Naive thymus-derived CD4-positive, alpha-beta T cell (primary cell): ENCODE measurements at regions of chr19 and their contacts with region 1.

Region 1: GRCh38 chr19:55605207-55605636 is 225 bp upstream of the ZNF865 start:
- DNase-seq: peak; percentile 90 to 99 (median 97)
- ATAC-seq: peak; percentile 87
- H3K4me3 ChIP-seq: peak overlapping the region; percentile 51
- H3K4me3 Mint-ChIP-seq: peak overlapping the region; percentile 78 to 98 (median 90)
- H3K27ac ChIP-seq: peak overlapping the region; percentile 90
- H3K27ac Mint-ChIP-seq: peak overlapping the region; percentile 77 to 96 (median 91)
- H3K4me1 ChIP-seq: peaks cover 7 to 18% of the 10 kb centered on the region in 2 donors
- H3K4me1 Mint-ChIP-seq: peaks cover 37 to 70% (median 64%) of the 10 kb centered on the region in 7 donors
- H3K27me3 ChIP-seq: no peaks in the 10 kb centered on the region
- H3K27me3 Mint-ChIP-seq: peaks cover 0 to 3% (median 0%) of the 10 kb centered on the region in 5 donors

Region 2: DNA sequence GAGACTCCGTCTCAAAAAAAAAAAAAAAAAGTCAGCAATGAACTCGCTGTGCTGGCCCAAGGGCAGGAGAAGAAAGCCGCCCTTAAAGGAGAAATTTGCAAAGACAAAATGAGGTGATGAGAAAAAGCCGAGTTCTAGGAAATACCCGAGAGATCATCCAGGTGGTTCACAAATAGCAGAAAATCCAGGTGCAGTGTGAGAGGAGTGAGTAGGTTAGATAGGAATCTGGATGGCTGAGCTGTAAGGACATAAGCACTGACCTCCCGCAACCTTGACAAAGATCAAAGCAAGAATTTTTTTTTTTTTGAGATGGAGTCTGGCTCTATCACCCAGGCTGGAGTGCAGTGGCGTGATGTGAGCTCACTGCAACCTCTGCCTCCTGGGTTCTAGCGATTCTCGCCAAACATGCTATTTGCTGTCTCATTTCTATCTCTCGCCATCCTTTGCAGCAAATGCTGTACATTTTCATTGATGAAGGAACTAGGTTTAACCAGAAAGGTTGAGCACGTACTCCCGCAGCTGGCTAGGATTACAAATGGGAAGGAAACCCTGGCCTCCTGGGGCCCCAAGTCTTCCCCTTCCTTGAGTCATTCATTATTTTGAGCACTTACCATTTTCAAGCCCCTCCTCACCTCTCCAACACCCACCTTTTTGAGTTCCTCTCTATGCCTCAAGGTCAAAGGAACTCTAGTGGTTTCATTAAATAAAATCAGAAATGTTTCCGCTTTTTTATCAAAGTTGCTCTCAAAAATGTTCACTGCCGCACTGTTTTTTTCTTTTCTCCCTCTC is 1819.9 kb before region 1 on chr19:
- CTCF ChIA-PET with region 1: no interaction called
- POLR2A ChIA-PET with region 1: no interaction called
- intact Hi-C with region 1: no loop called
- DNase-seq: no peak
- ATAC-seq: no peak
- H3K4me3 ChIP-seq: no peak overlapping the region
- H3K4me3 Mint-ChIP-seq: no peak overlapping the region
- H3K27ac ChIP-seq: no peak overlapping the region
- H3K27ac Mint-ChIP-seq: peak overlapping the region in 1 of 9 donors; percentile 4
- H3K4me1 ChIP-seq: no peaks in the 10 kb centered on the region
- H3K4me1 Mint-ChIP-seq: peaks cover 0 to 5% (median 0%) of the 10 kb centered on the region in 7 donors
- H3K27me3 ChIP-seq: no peaks in the 10 kb centered on the region
- H3K27me3 Mint-ChIP-seq: peaks cover 0 to 27% (median 18%) of the 10 kb centered on the region in 5 donors

Region 3: DNA sequence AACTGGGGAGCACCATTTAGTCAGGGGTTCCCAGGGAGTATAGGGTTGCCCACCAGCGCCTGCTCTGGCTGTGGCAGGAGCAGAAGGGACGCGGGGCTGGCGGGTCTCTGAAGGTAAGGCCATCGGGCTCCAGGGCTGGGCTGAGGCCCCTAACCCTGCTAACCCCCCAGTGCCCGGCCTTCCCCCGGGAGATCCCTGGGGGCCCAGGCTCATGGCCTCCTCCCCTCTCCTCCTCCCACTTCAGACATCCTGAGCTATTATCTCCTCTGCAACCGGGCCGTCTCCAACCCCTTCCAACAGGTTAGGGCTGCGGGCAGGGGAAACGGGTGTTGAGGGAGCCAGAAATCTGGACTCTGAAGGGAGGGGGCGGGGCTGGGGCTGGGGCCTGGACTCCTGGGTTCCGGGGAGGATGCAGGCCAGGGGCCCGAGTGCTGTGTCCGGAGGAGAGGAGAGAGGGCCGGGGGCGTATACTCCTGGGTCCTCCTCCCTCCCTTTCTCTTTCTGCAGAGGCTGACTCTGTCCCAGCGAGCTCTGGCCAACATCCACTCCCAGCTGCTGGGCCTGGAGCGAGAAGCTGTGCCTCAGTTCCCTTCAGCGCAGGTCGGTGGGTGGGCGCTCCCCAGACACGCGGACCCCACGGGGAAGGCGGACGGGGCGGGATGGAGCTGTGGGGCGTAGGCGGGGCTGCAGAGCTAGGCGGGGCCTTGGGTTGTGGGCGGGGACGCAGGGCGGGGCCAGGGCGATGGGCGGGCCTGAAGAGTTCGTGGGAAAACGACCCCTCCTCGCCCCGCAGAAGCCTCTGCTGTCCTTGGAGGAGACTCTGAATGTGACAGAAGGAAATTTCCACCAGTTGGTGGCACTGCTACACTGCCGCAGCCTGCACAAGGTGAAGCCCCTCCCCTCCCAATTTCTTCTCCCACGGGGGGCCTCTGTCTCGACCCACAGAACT is 1174.6 kb before region 1 on chr19:
- CTCF ChIA-PET with region 1: no interaction called
- POLR2A ChIA-PET with region 1: no interaction called
- intact Hi-C with region 1: no loop called
- DNase-seq: peak in 7 of 9 donors; percentile 22 to 60 (median 33)
- ATAC-seq: peak; percentile 87
- H3K4me3 ChIP-seq: no peak overlapping the region
- H3K4me3 Mint-ChIP-seq: peak overlapping the region; percentile 45 to 84 (median 66)
- H3K27ac ChIP-seq: no peak overlapping the region
- H3K27ac Mint-ChIP-seq: peak overlapping the region in 3 of 9 donors; percentile 24 to 63 (median 59)
- H3K4me1 ChIP-seq: peaks cover 0 to 10% of the 10 kb centered on the region in 2 donors
- H3K4me1 Mint-ChIP-seq: peaks cover 12 to 24% (median 21%) of the 10 kb centered on the region in 7 donors
- H3K27me3 ChIP-seq: no peaks in the 10 kb centered on the region
- H3K27me3 Mint-ChIP-seq: peaks cover 0 to 23% (median 12%) of the 10 kb centered on the region in 5 donors

Region 4: DNA sequence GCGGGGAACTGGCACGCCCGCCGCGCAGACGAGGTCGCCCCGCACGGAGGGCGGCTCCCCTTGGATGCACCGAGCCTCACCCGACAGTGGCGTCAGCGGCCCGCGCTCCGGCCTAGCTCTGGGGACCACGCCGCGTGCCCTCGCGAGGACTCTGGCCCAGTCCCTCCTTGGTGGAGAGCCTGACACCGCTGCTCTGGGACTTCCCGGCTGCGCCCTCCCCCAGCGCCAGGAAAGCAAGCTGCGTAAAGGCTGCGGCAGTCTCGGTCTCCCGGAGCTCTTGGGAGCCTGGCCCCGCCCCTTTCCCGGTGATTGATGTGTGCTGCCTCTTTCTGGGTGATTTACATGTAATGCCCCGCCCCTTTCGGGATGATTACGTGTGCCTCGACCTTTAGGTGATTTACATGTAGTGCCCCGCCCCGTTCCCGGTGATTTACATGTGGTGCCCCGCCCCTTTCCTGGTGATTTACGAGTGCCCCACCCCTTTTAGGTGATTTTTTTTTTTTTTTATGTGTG is 1141.6 kb before region 1 on chr19 and contains the start of gene LENG9:
- CTCF ChIA-PET with region 1: no interaction called
- POLR2A ChIA-PET with region 1: no interaction called
- intact Hi-C with region 1: loop called in 1 of 2 experiments (anchors 5 kb)
- DNase-seq: peak; percentile 73 to 97 (median 87)
- ATAC-seq: peak; percentile 81
- H3K4me3 ChIP-seq: peak within 1 kb of the TSS; percentile 88
- H3K4me3 Mint-ChIP-seq: peak within 1 kb of the TSS; percentile 84 to 95 (median 92)
- H3K27ac ChIP-seq: peak within 1 kb of the TSS; percentile 71
- H3K27ac Mint-ChIP-seq: peak within 1 kb of the TSS; percentile 86 to 98 (median 93)
- H3K4me1 ChIP-seq: peaks cover 17 to 23% of the 10 kb centered on the region in 2 donors
- H3K4me1 Mint-ChIP-seq: peaks cover 16 to 35% (median 33%) of the 10 kb centered on the region in 7 donors
- H3K27me3 ChIP-seq: peaks cover 0 to 3% of the 10 kb centered on the region in 2 donors
- H3K27me3 Mint-ChIP-seq: peaks cover 5 to 23% (median 7%) of the 10 kb centered on the region in 5 donors
- total RNA-seq, gene LENG9: 3.5 to 6.1 (median 4.3) TPM

Region 5: DNA sequence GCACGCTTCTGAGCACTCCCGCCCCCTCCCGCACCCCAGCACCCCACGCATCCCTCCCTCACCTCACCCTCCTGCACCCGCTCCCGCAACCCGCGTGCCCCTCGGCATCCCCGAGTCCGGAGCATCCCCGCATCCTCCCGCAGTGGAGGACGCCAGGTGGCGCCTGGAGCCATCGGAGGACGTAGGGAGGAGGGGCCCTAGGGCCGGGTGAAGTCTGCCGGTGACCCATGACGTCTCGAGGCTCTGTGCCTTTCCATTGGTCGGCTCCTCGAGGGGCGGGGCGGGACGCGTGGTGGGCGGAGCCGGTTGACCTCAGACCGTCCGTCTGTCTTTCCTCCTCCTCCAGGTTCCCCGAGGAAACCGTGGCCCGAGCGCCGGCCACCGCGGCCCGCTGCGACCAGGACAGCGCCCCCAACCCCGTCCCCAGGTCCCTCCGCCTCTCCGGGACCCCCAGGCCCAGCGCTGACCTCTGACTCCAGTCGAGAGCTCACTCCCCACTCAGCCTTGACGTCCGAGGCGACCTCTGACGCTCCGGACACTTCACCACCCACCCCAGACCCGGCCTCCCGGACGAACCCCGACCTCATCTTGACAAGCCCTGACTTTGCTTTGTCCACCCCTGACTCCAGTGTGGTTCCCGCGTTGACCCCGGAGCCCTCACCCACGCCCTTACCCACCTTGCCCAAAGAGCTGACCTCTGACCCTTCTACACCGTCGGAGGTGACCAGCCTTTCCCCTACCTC is 88.2 kb before region 1 on chr19:
- CTCF ChIA-PET with region 1: interaction called, 11 read pairs
- POLR2A ChIA-PET with region 1: interaction called, 7 read pairs
- intact Hi-C with region 1: loop called (anchors 1 kb)
- DNase-seq: peak; percentile 77 to 94 (median 85)
- ATAC-seq: peak; percentile 100
- H3K4me3 ChIP-seq: peak overlapping the region; percentile 48
- H3K4me3 Mint-ChIP-seq: peak overlapping the region; percentile 74 to 89 (median 84)
- H3K27ac ChIP-seq: peak overlapping the region; percentile 66
- H3K27ac Mint-ChIP-seq: peak overlapping the region in 8 of 9 donors; percentile 55 to 96 (median 83)
- H3K4me1 ChIP-seq: peaks cover 3 to 4% of the 10 kb centered on the region in 2 donors
- H3K4me1 Mint-ChIP-seq: peaks cover 0 to 4% (median 4%) of the 10 kb centered on the region in 7 donors
- H3K27me3 ChIP-seq: no peaks in the 10 kb centered on the region
- H3K27me3 Mint-ChIP-seq: peaks cover 0 to 4% (median 3%) of the 10 kb centered on the region in 5 donors

Region 6: DNA sequence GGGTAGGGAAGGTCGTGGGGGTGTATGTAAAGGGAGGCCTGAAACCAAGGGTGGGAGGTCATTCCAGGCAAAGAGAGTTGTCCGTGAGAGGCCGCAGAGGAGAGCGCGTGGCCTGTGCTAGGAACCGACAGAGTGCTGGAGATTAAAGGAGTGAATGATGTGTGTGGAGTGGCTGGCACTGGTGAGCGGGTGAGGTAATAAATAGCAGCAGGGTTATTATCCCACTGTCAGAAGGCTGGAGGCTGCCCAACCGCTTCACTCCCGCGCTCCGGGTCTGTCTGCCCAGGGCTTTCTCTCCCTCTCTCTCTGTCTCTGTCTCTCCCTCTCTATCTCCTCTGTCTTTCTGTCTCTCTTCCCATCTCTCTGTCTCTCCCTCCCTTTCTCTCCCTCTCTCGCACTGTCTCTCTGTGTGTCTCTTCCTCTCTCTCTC is 41.9 kb before region 1 on chr19:
- CTCF ChIA-PET with region 1: no interaction called
- POLR2A ChIA-PET with region 1: no interaction called
- intact Hi-C with region 1: no loop called
- DNase-seq: no peak
- ATAC-seq: no peak
- H3K4me3 ChIP-seq: no peak overlapping the region
- H3K4me3 Mint-ChIP-seq: no peak overlapping the region
- H3K27ac ChIP-seq: no peak overlapping the region
- H3K27ac Mint-ChIP-seq: no peak overlapping the region
- H3K4me1 ChIP-seq: no peaks in the 10 kb centered on the region
- H3K4me1 Mint-ChIP-seq: no peaks in the 10 kb centered on the region
- H3K27me3 ChIP-seq: no peaks in the 10 kb centered on the region
- H3K27me3 Mint-ChIP-seq: peaks cover 0 to 24% (median 13%) of the 10 kb centered on the region in 5 donors

Region 7: GRCh38 chr19:55586976-55587668 is 18.1 kb before region 1 on chr19:
- CTCF ChIA-PET with region 1: interaction called, 4 read pairs
- POLR2A ChIA-PET with region 1: interaction called, 7 read pairs
- intact Hi-C with region 1: loop called (anchors 1 kb)
- DNase-seq: peak; percentile 83 to 92 (median 89)
- ATAC-seq: peak; percentile 99
- H3K4me3 ChIP-seq: peak overlapping the region; percentile 63
- H3K4me3 Mint-ChIP-seq: peak overlapping the region; percentile 83 to 95 (median 88)
- H3K27ac ChIP-seq: peak overlapping the region; percentile 32
- H3K27ac Mint-ChIP-seq: peak overlapping the region; percentile 16 to 88 (median 86)
- H3K4me1 ChIP-seq: peaks cover 10 to 22% of the 10 kb centered on the region in 2 donors
- H3K4me1 Mint-ChIP-seq: peaks cover 8 to 41% (median 27%) of the 10 kb centered on the region in 7 donors
- H3K27me3 ChIP-seq: no peaks in the 10 kb centered on the region
- H3K27me3 Mint-ChIP-seq: peaks cover 0 to 32% (median 0%) of the 10 kb centered on the region in 5 donors

Region 8: GRCh38 chr19:55661826-55662225 is 56.6 kb after region 1 on chr19:
- CTCF ChIA-PET with region 1: no interaction called
- POLR2A ChIA-PET with region 1: no interaction called
- intact Hi-C with region 1: no loop called
- DNase-seq: no peak
- ATAC-seq: no peak
- H3K4me3 ChIP-seq: no peak overlapping the region
- H3K4me3 Mint-ChIP-seq: peak overlapping the region in 1 of 10 donors; percentile 68
- H3K27ac ChIP-seq: no peak overlapping the region
- H3K27ac Mint-ChIP-seq: peak overlapping the region in 3 of 9 donors; percentile 59 to 72 (median 66)
- H3K4me1 ChIP-seq: peaks cover 18 to 37% of the 10 kb centered on the region in 2 donors
- H3K4me1 Mint-ChIP-seq: peaks cover 23 to 74% (median 50%) of the 10 kb centered on the region in 7 donors
- H3K27me3 ChIP-seq: no peaks in the 10 kb centered on the region
- H3K27me3 Mint-ChIP-seq: no peaks in the 10 kb centered on the region